T-cell (primary cell): ENCODE measurements at regions of chr7 and their contacts with region 1.

Region 1: DNA sequence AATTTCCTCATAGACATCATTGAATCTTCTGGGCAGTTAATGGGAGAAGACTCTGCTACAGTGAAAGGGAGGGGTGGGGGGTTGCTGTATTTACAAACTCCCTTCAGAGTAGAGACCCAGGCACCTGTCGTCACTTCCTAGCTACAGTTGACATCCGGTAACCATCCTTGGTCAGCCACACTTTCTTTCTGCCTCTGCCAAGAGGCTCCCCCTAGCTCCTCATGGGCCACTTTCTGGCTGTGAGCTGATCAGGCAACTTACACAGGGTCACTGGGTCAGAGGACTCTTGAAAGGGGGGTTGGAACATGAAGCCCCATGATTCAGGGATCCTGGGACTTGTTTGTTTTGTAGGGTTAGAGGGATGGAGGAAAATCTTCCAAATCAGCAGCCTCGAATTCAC is 1.2 kb downstream of the TECPR1 start:
- DNase-seq: peak; percentile 25 to 74 (median 56)
- ATAC-seq: peak; percentile 20 to 34 (median 32)
- H3K4me3 ChIP-seq: peak overlapping the region; percentile 66 to 91
- H3K4me3 Mint-ChIP-seq: peak overlapping the region; percentile 87 to 96 (median 94)
- H3K27ac ChIP-seq: peak overlapping the region; percentile 86
- H3K27ac Mint-ChIP-seq: peak overlapping the region; percentile 94 to 98
- H3K4me1 ChIP-seq: peaks cover 25 to 68% of the 10 kb centered on the region in 2 experiments
- H3K4me1 Mint-ChIP-seq: peaks cover 61 to 72% (median 66%) of the 10 kb centered on the region in 3 donors
- H3K27me3 ChIP-seq: no peaks in the 10 kb centered on the region
- H3K27me3 Mint-ChIP-seq: no peaks in the 10 kb centered on the region

Region 2: DNA sequence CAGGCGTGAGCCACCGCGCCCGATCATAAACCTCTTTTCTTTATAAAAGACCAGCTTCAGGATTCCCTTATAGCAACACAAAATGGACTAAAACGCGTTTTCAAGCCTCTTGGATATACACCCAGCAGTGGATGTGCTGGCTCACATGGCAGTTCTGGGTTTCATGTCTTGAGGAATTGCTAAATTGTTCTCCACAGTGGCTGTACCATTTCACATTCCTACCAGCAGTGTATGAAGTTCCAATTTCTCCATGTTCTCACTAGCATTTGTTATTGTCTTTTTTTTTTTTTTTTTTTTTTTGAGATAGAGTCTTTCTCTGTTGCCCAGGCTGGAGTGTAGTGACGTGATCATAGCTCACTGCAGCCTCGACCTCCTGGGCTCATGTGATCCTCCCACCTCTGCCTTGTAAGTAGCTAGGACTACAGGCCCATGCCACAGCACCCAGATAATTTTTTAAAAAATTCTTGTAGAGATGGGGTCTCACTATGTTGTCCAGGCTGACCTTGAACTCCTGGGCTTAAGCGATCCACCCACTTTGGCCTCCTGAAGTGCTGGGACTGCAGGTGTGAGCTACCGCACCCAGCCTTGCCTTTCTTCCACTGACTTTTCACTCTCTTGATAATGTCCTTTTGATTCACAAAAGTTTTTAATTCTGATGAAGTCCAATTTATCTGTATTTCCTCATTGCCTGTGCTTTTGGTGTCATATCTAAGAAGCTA is 16.2 kb before region 1 on chr7:
- CTCF ChIA-PET with region 1: interaction called in 1 of 2 experiments, 3 read pairs
- POLR2A ChIA-PET with region 1: interaction called in 1 of 2 experiments, 15 read pairs
- DNase-seq: no peak
- ATAC-seq: no peak
- H3K4me3 ChIP-seq: no peak overlapping the region
- H3K4me3 Mint-ChIP-seq: no peak overlapping the region
- H3K27ac ChIP-seq: no peak overlapping the region
- H3K27ac Mint-ChIP-seq: no peak overlapping the region
- H3K4me1 ChIP-seq: no peaks in the 10 kb centered on the region
- H3K4me1 Mint-ChIP-seq: no peaks in the 10 kb centered on the region
- H3K27me3 ChIP-seq: no peaks in the 10 kb centered on the region
- H3K27me3 Mint-ChIP-seq: no peaks in the 10 kb centered on the region

Region 3: DNA sequence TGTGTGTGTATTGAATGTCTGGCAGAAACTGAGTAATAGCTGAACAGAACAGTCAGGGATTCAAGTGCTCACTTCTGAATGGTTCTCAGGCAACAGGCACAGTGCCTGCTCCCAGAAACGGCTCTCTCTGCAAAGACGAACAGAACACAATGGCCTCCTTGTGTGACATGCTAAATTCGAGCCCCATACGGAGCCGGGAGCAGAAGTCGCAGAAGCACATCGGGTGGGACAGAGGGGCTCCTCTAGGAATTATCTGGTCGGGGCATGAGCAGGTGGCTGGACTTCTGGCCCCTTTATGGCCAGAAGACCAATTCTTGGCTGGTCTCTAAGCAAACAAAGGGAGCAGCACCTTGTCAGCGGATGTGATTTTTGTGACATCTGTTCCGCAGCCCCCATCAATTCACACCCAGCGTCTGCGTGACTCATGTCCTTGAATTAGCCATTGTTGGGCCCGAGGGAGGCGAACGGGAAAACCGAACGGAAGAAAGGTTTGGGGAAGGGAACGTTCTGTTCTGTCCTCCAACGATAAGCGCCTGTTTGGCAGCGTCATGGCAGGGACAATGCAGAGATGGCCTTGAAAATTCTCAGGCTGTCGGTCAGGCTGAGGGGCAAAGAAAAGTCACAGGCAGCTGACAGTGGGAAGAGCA is 319.0 kb after region 1 on chr7:
- CTCF ChIA-PET with region 1: no interaction called
- POLR2A ChIA-PET with region 1: no interaction called
- DNase-seq: no peak
- ATAC-seq: no peak
- H3K4me3 ChIP-seq: no peak overlapping the region
- H3K4me3 Mint-ChIP-seq: no peak overlapping the region
- H3K27ac ChIP-seq: no peak overlapping the region
- H3K27ac Mint-ChIP-seq: no peak overlapping the region
- H3K4me1 ChIP-seq: no peaks in the 10 kb centered on the region
- H3K4me1 Mint-ChIP-seq: no peaks in the 10 kb centered on the region
- H3K27me3 ChIP-seq: peaks cover 0 to 6% of the 10 kb centered on the region in 2 experiments
- H3K27me3 Mint-ChIP-seq: peaks cover 5 to 20% of the 10 kb centered on the region in 2 donors